ENCODE measurements at regions of chr2 and their contacts with region 1.

Region 1: GRCh38 chr2:105521205-105521604 is 122.4 kb upstream of the FHL2 start:
- DNase-seq: peak in 4 of 9 donors; percentile 8 to 16 (median 16)
- ATAC-seq: no peak
- H3K4me3 ChIP-seq: no peak overlapping the region
- H3K4me3 Mint-ChIP-seq: no peak overlapping the region
- H3K27ac ChIP-seq: no peak overlapping the region
- H3K27ac Mint-ChIP-seq: no peak overlapping the region
- H3K4me1 ChIP-seq: no peaks in the 10 kb centered on the region
- H3K4me1 Mint-ChIP-seq: no peaks in the 10 kb centered on the region
- H3K27me3 ChIP-seq: no peaks in the 10 kb centered on the region
- H3K27me3 Mint-ChIP-seq: peaks cover 0 to 6% (median under 1%) of the 10 kb centered on the region in 5 donors

Region 2: DNA sequence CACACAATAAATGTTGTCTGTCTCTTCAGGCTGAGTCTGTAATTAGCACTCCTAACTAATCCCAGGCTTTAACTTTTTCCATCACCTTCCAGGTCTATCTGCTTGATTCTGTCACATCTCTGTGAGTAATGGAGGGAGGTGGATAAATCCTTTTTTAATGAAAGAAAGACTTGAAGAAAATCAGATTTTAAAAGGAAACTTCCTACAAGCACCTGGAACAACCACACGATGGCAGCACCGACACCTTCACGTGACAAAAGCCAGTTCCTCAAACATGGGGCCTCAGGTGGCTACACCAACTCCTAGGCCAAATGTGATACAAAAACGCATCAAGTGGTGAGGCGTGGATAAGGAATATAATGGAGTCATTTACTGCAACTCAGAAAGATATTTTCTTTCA is 233.5 kb before region 1 on chr2:
- CTCF ChIA-PET with region 1: interaction called, 3 read pairs
- POLR2A ChIA-PET with region 1: no interaction called
- intact Hi-C with region 1: loop called in 1 of 2 experiments (anchors 5 kb)
- DNase-seq: peak in 5 of 9 donors; percentile 7 to 22 (median 11)
- ATAC-seq: peak; percentile 44
- H3K4me3 ChIP-seq: no peak overlapping the region
- H3K4me3 Mint-ChIP-seq: no peak overlapping the region
- H3K27ac ChIP-seq: no peak overlapping the region
- H3K27ac Mint-ChIP-seq: peak overlapping the region in 1 of 9 donors; percentile 21
- H3K4me1 ChIP-seq: no peaks in the 10 kb centered on the region
- H3K4me1 Mint-ChIP-seq: peaks cover 0 to 4% (median 0%) of the 10 kb centered on the region in 7 donors
- H3K27me3 ChIP-seq: no peaks in the 10 kb centered on the region
- H3K27me3 Mint-ChIP-seq: no peaks in the 10 kb centered on the region

Region 3: GRCh38 chr2:105344704-105345345 is 176.4 kb before region 1 on chr2:
- CTCF ChIA-PET with region 1: interaction called, 5 read pairs
- POLR2A ChIA-PET with region 1: no interaction called
- intact Hi-C with region 1: loop called (anchors 1 kb)
- DNase-seq: peak in 5 of 9 donors; percentile 31 to 49 (median 43)
- ATAC-seq: peak; percentile 65
- H3K4me3 ChIP-seq: no peak overlapping the region
- H3K4me3 Mint-ChIP-seq: no peak overlapping the region
- H3K27ac ChIP-seq: no peak overlapping the region
- H3K27ac Mint-ChIP-seq: peak overlapping the region in 1 of 9 donors; percentile 50
- H3K4me1 ChIP-seq: no peaks in the 10 kb centered on the region
- H3K4me1 Mint-ChIP-seq: peaks cover 4 to 20% (median 9%) of the 10 kb centered on the region in 7 donors
- H3K27me3 ChIP-seq: no peaks in the 10 kb centered on the region
- H3K27me3 Mint-ChIP-seq: no peaks in the 10 kb centered on the region

Region 4: GRCh38 chr2:105398699-105399432 is 122.3 kb before region 1 on chr2 and contains the start of gene FHL2:
- CTCF ChIA-PET with region 1: no interaction called
- POLR2A ChIA-PET with region 1: no interaction called
- intact Hi-C with region 1: no loop called
- DNase-seq: peak; percentile 52 to 76 (median 69)
- ATAC-seq: peak; percentile 98
- H3K4me3 ChIP-seq: peak within 1 kb of the TSS; percentile 70
- H3K4me3 Mint-ChIP-seq: peak within 1 kb of the TSS; percentile 77 to 94 (median 90)
- H3K27ac ChIP-seq: peak within 1 kb of the TSS; percentile 67
- H3K27ac Mint-ChIP-seq: peak within 1 kb of the TSS in 8 of 9 donors; percentile 22 to 77 (median 63)
- H3K4me1 ChIP-seq: peaks cover 0 to 5% of the 10 kb centered on the region in 2 donors
- H3K4me1 Mint-ChIP-seq: peaks cover 0 to 20% (median 5%) of the 10 kb centered on the region in 7 donors
- H3K27me3 ChIP-seq: no peaks in the 10 kb centered on the region
- H3K27me3 Mint-ChIP-seq: peaks cover 7 to 47% (median 14%) of the 10 kb centered on the region in 5 donors
- total RNA-seq, gene FHL2: 0.19 to 3.6 (median 0.63) TPM in 4 of 5 experiments, not detected in the other

Region 5: GRCh38 chr2:105454801-105455485 is 66.3 kb before region 1 on chr2:
- CTCF ChIA-PET with region 1: no interaction called
- POLR2A ChIA-PET with region 1: no interaction called
- intact Hi-C with region 1: loop called in 1 of 2 experiments (anchors 2 kb)
- DNase-seq: peak in 1 of 9 donors; percentile 2
- ATAC-seq: peak; percentile 36
- H3K4me3 ChIP-seq: no peak overlapping the region
- H3K4me3 Mint-ChIP-seq: no peak overlapping the region
- H3K27ac ChIP-seq: no peak overlapping the region
- H3K27ac Mint-ChIP-seq: no peak overlapping the region
- H3K4me1 ChIP-seq: no peaks in the 10 kb centered on the region
- H3K4me1 Mint-ChIP-seq: peaks cover 0 to 12% (median 0%) of the 10 kb centered on the region in 7 donors
- H3K27me3 ChIP-seq: no peaks in the 10 kb centered on the region
- H3K27me3 Mint-ChIP-seq: peaks cover 0 to 19% (median 5%) of the 10 kb centered on the region in 5 donors

Region 6: GRCh38 chr2:106523976-106524665 is 1002.9 kb after region 1 on chr2:
- CTCF ChIA-PET with region 1: no interaction called
- POLR2A ChIA-PET with region 1: no interaction called
- intact Hi-C with region 1: no loop called
- DNase-seq: no peak
- ATAC-seq: no peak
- H3K4me3 ChIP-seq: no peak overlapping the region
- H3K4me3 Mint-ChIP-seq: no peak overlapping the region
- H3K27ac ChIP-seq: no peak overlapping the region
- H3K27ac Mint-ChIP-seq: no peak overlapping the region
- H3K4me1 ChIP-seq: no peaks in the 10 kb centered on the region
- H3K4me1 Mint-ChIP-seq: peaks cover 0 to 1% (median 0%) of the 10 kb centered on the region in 7 donors
- H3K27me3 ChIP-seq: no peaks in the 10 kb centered on the region
- H3K27me3 Mint-ChIP-seq: peaks cover 0 to 6% (median 0%) of the 10 kb centered on the region in 5 donors